Mucosa of descending colon (tissue), 3 donors: ENCODE measurements at regions of chrX and their contacts with region 1.

Region 1: GRCh38 chrX:104270920-104271512 is 16.3 kb upstream of the ESX1 start:
- DNase-seq: peak in 1 of 3 donors; percentile 42
- ATAC-seq: peak; percentile 54
- H3K4me3 ChIP-seq: no peak overlapping the region
- H3K4me1 ChIP-seq: no peaks in the 10 kb centered on the region
- CTCF ChIP-seq: no peak

Region 2: DNA sequence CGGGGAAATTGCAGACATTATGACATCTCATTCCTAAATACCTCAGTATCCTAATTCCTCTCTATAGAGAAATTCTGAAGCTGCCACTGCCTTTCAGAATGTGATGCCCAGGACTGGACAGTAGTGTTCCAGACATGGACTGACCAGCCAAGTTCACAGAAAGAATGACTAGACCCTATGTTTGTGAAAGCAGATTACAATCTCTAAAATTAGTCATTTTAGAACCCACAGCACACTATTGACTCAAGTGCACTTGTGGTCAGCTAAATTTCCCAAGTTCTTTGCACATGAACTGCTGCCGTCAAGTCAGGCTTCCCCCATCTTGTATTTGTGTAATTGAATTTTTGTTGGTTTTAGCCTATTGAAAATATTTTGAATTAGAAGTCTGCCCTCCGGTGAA is 64.7 kb after region 1 on chrX:
- intact Hi-C with region 1: loop called in 1 of 2 experiments (anchors 10 kb)
- DNase-seq: no peak
- ATAC-seq: no peak
- H3K4me3 ChIP-seq: no peak overlapping the region
- H3K4me1 ChIP-seq: no peaks in the 10 kb centered on the region
- CTCF ChIP-seq: no peak